ENCODE measurements at regions of chr15 and their contacts with region 1.

Region 1: GRCh38 chr15:41774062-41774881 is at the start of gene MAPKBP1:
- DNase-seq: peak; percentile 93 to 99 (median 98)

Region 2: GRCh38 chr15:41811432-41812195 is 37.3 kb after region 1 on chr15:
- intact Hi-C with region 1: loop called (anchors 5 kb)
- DNase-seq: peak; percentile 76 to 97 (median 92)

Measured in head of caudate nucleus (tissue), 42 donors.